Psoas muscle (tissue), 8 donors: ENCODE measurements at regions of chr6 and their contacts with region 1.

Region 1: GRCh38 chr6:41695825-41696224 is 39.6 kb downstream of the TFEB start:
- DNase-seq: no peak
- ATAC-seq: peak in 3 of 4 donors; percentile 21 to 40 (median 39)
- H3K4me3 ChIP-seq: no peak overlapping the region
- H3K27ac ChIP-seq: no peak overlapping the region
- H3K4me1 ChIP-seq: peaks cover 50% of the 10 kb centered on the region
- H3K27me3 ChIP-seq: no peaks in the 10 kb centered on the region
- CTCF ChIP-seq: no peak

Region 2: DNA sequence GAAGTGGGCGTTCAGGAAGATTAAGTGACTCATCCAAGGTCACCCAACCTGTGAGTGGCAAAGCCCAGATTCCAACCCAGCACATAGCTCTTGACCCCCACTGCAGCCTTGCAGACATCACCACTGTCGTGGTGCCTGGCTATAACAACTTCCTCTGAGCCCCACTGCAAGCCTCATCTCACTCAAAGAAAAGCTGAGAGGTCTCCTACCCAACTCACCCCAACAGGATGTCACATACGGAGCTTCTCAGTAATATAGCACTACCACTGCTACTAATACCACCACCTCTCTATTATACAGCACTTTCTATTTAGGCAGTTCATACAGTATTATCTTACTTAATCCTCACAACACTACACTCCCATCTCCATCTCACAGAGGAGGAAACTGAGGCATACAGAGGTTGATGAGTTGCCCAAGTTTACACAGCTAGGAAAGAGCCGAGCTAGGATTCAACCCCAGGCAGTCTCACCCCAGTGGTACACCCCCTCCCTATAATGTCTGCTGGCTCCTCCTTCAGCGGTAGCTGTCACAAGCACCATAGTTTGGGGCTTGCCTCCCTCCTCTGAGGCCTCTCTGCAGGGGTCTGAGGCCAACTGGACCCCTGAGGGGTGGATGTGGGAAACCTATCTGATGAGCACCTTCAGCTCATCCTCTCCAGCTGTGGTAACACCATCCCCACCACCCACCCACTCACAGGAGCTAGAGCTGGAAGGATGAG is 20.1 kb after region 1 on chr6:
- intact Hi-C with region 1: loop called in 1 of 2 experiments (anchors 1 kb)
- DNase-seq: peak in 1 of 2 donors; percentile 45
- ATAC-seq: peak in 1 of 4 donors; percentile 0
- H3K4me3 ChIP-seq: no peak overlapping the region
- H3K27ac ChIP-seq: peak overlapping the region; percentile 88
- H3K4me1 ChIP-seq: peaks cover 97% of the 10 kb centered on the region
- H3K27me3 ChIP-seq: no peaks in the 10 kb centered on the region
- CTCF ChIP-seq: no peak

Region 3: DNA sequence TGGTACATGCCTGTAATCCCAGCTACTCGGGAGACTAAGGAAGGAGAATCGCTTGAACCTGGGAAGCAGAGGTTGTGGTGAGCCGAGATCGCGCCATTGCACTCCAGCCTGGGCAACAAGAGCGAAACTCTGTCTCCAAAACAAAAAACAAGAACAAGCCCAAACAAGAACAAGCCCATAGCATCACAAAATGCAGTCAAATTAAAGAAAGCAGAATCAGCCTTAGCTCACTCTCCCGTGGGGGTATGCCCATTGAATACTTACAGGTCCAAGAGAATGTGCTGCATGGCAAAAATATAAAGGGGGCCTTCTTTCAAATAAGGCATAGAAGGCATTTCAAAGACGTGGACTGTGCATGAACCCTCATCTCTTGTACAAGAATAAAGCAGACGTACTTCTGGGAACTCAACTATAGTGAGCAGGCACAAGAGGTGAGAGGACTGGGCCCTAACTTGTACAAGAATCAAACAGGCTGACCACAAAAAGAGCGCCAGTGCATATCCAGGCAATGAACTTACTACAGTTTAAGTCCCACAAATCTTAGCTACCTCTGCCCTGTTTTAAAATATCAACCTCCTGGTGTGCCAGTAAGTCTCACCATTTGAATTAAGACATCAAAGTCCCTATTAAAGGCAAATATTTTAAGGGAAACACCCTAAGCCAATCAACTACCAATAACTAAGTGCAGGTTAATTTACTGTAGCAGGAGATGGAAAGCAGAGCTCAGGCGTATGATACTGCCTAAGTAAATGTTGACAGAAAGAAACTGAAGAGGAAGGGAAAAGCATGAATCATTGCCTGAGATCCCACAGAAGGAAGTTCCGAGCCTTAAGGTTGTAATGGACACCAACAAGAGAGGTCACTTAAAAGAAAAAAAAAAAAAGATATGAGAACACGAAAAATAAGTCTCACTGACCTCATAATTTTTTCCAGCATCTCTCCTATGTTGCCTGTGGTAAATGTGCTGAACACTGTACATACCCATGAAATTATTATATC is 129.0 kb after region 1 on chr6:
- intact Hi-C with region 1: no loop called
- DNase-seq: no peak
- ATAC-seq: no peak
- H3K4me3 ChIP-seq: no peak overlapping the region
- H3K27ac ChIP-seq: no peak overlapping the region
- H3K4me1 ChIP-seq: no peaks in the 10 kb centered on the region
- H3K27me3 ChIP-seq: no peaks in the 10 kb centered on the region
- CTCF ChIP-seq: no peak